ENCODE measurements at regions of chr3 and their contacts with region 1.

Region 1: DNA sequence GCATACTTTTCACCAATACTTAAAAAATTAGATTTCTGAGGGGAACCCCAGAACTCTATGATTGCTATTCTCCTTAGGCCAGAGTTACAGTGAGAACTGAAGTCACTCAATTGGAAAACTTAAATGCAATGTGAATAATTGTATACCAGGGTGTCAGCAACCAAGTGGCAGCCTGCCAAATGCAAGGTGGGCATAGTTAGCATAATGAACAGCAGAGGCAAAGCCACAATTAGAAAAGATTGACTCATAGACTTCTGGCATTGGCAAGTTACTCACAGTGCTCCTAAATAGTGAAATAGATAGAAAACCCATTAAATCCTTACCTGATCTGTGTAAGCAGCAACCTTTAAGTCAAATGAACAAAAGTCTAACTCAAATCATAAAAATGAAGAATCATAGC is 94.9 kb downstream of the BCHE start:
- DNase-seq: no peak
- H3K4me3 ChIP-seq: no peak overlapping the region
- H3K27ac ChIP-seq: no peak overlapping the region
- H3K4me1 ChIP-seq: no peaks in the 10 kb centered on the region
- H3K27me3 ChIP-seq: no peaks in the 10 kb centered on the region
- CTCF ChIP-seq: no peak
- EP300 ChIP-seq: no peak
- POLR2A ChIP-seq: no peak

Region 2: GRCh38 chr3:165642761-165643432 is 99.5 kb before region 1 on chr3:
- intact Hi-C with region 1: loop called (anchors 10 kb)
- DNase-seq: peak; percentile 72
- H3K4me3 ChIP-seq: no peak overlapping the region
- H3K27ac ChIP-seq: peak overlapping the region; percentile 64 to 85 (median 75)
- H3K4me1 ChIP-seq: peaks cover 0 to 30% (median 21%) of the 10 kb centered on the region in 4 donors
- H3K27me3 ChIP-seq: no peaks in the 10 kb centered on the region
- CTCF ChIP-seq: no peak
- EP300 ChIP-seq: no peak
- POLR2A ChIP-seq: no peak